B cell (primary cell): ENCODE measurements at regions of chr11 and their contacts with region 1.

Region 1: DNA sequence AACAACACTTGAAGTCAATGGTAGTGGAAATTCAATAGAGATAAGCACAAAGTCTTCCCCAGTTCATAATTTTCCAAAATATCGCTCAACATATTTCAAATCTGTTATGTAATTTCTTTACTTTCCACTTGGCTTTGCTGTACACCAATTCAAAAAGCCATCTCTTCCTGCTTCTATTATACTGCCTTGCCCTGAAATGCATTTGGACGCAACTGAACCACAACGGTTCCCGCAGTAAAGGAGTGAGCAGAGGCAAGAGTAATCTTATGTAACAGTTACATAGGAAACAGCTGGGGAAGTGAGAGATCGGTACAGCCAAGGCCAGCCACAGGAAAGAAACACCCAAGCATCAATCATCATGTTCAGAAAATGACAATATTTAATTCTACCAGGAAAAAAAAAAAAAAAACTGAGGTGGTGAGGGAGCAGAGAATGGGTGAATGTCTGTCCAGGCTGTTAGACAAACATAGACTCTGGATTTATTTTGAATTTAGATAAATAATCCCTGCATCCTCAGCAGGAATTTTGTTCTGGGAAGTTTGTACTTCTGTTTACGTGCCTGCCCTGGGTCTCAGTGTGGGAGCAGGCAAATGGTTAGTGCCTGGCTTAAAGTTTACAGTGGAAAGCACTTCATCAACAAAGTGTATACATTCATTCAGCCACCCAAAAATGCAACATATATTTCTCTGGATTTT is 392.2 kb downstream of the ETS1 start:
- DNase-seq: peak; percentile 68
- ATAC-seq: peak; percentile 68
- H3K4me3 ChIP-seq: no peak overlapping the region
- H3K4me3 Mint-ChIP-seq: peak overlapping the region; percentile 17
- H3K27ac ChIP-seq: no peak overlapping the region
- H3K27ac Mint-ChIP-seq: peak overlapping the region; percentile 12
- H3K4me1 ChIP-seq: peaks cover 11 to 12% of the 10 kb centered on the region in 2 donors
- H3K4me1 Mint-ChIP-seq: peaks cover 17% of the 10 kb centered on the region
- H3K27me3 ChIP-seq: no peaks in the 10 kb centered on the region
- H3K27me3 Mint-ChIP-seq: no peaks in the 10 kb centered on the region
- CTCF ChIP-seq: peak; percentile 57

Region 2: DNA sequence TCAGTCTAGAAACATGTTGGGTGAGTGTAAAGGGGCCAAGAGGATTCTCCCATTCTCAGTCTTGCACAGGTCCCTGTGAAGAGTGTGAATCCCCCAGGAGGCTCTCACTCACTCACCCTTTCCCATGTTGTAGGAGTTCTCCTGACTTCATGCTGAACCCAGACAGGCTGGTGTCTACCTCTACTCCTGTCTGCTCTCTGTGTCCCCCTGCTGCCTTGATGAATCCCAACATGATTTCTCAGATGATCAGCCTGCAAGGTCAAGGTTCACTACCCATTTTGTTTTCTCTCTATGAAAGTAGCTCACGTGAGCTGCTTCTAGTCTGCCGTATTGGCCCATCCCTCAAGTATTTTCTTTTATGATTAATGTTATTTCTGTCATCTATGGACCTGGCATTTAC is 108.4 kb before region 1 on chr11:
- CTCF ChIA-PET with region 1: no interaction called
- POLR2A ChIA-PET with region 1: no interaction called
- intact Hi-C with region 1: no loop called
- DNase-seq: no peak
- ATAC-seq: no peak
- H3K4me3 ChIP-seq: no peak overlapping the region
- H3K4me3 Mint-ChIP-seq: no peak overlapping the region
- H3K27ac ChIP-seq: no peak overlapping the region
- H3K27ac Mint-ChIP-seq: no peak overlapping the region
- H3K4me1 ChIP-seq: no peaks in the 10 kb centered on the region
- H3K4me1 Mint-ChIP-seq: no peaks in the 10 kb centered on the region
- H3K27me3 ChIP-seq: peaks cover 0 to 3% (median 0%) of the 10 kb centered on the region in 4 experiments
- H3K27me3 Mint-ChIP-seq: peaks cover 16% of the 10 kb centered on the region
- CTCF ChIP-seq: no peak

Region 3: DNA sequence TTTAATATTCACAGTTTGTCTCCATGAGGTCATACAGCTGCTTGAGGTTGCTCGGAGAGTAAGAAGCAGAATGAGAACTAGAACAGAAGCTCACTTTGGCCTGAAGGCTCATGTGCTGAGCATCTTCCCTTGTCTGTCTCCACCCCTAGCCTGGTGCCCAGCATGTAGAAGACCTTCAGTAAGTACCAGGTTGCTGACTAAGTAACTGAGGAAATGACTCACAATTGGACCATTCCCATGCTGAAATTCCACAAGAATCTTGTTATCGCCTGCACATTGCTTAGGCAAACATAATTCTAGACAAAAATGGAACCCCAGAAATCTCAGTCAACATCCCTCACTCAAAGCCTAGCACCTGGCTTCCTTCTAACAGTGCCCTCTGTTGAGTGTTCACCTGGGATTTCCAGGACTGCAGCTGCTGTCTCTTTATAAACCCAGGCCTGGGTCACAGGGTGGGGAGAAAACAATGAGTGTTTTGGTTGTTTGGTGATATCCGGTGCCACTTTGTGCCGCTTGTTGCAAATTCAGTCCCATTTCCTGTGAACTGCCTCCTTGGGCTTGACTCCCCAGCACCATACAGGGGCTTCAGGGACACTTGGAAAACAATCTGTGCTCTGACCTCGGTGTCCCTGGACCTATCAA is 14.6 kb before region 1 on chr11:
- CTCF ChIA-PET with region 1: no interaction called
- POLR2A ChIA-PET with region 1: no interaction called
- intact Hi-C with region 1: no loop called
- DNase-seq: no peak
- ATAC-seq: no peak
- H3K4me3 ChIP-seq: no peak overlapping the region
- H3K4me3 Mint-ChIP-seq: no peak overlapping the region
- H3K27ac ChIP-seq: no peak overlapping the region
- H3K27ac Mint-ChIP-seq: no peak overlapping the region
- H3K4me1 ChIP-seq: no peaks in the 10 kb centered on the region
- H3K4me1 Mint-ChIP-seq: no peaks in the 10 kb centered on the region
- H3K27me3 ChIP-seq: no peaks in the 10 kb centered on the region
- H3K27me3 Mint-ChIP-seq: peaks cover 3% of the 10 kb centered on the region
- CTCF ChIP-seq: no peak

Region 4: GRCh38 chr11:128226106-128226716 is 31.0 kb after region 1 on chr11:
- CTCF ChIA-PET with region 1: no interaction called
- POLR2A ChIA-PET with region 1: no interaction called
- intact Hi-C with region 1: loop called (anchors 5 kb)
- DNase-seq: no peak
- ATAC-seq: no peak
- H3K4me3 ChIP-seq: no peak overlapping the region
- H3K4me3 Mint-ChIP-seq: no peak overlapping the region
- H3K27ac ChIP-seq: no peak overlapping the region
- H3K27ac Mint-ChIP-seq: no peak overlapping the region
- H3K4me1 ChIP-seq: peaks cover 11 to 15% of the 10 kb centered on the region in 2 donors
- H3K4me1 Mint-ChIP-seq: peaks cover 23% of the 10 kb centered on the region
- H3K27me3 ChIP-seq: no peaks in the 10 kb centered on the region
- H3K27me3 Mint-ChIP-seq: no peaks in the 10 kb centered on the region
- CTCF ChIP-seq: no peak

Region 5: GRCh38 chr11:128279866-128280265 is 84.7 kb after region 1 on chr11:
- CTCF ChIA-PET with region 1: no interaction called
- POLR2A ChIA-PET with region 1: no interaction called
- intact Hi-C with region 1: loop called (anchors 10 kb)
- DNase-seq: no peak
- ATAC-seq: no peak
- H3K4me3 ChIP-seq: no peak overlapping the region
- H3K4me3 Mint-ChIP-seq: no peak overlapping the region
- H3K27ac ChIP-seq: no peak overlapping the region
- H3K27ac Mint-ChIP-seq: no peak overlapping the region
- H3K4me1 ChIP-seq: peaks cover 7 to 13% of the 10 kb centered on the region in 2 donors
- H3K4me1 Mint-ChIP-seq: peaks cover 17% of the 10 kb centered on the region
- H3K27me3 ChIP-seq: no peaks in the 10 kb centered on the region
- H3K27me3 Mint-ChIP-seq: no peaks in the 10 kb centered on the region
- CTCF ChIP-seq: no peak